Caco-2 (cell line): ENCODE measurements at regions of chr11 and their contacts with region 1.

Region 1: DNA sequence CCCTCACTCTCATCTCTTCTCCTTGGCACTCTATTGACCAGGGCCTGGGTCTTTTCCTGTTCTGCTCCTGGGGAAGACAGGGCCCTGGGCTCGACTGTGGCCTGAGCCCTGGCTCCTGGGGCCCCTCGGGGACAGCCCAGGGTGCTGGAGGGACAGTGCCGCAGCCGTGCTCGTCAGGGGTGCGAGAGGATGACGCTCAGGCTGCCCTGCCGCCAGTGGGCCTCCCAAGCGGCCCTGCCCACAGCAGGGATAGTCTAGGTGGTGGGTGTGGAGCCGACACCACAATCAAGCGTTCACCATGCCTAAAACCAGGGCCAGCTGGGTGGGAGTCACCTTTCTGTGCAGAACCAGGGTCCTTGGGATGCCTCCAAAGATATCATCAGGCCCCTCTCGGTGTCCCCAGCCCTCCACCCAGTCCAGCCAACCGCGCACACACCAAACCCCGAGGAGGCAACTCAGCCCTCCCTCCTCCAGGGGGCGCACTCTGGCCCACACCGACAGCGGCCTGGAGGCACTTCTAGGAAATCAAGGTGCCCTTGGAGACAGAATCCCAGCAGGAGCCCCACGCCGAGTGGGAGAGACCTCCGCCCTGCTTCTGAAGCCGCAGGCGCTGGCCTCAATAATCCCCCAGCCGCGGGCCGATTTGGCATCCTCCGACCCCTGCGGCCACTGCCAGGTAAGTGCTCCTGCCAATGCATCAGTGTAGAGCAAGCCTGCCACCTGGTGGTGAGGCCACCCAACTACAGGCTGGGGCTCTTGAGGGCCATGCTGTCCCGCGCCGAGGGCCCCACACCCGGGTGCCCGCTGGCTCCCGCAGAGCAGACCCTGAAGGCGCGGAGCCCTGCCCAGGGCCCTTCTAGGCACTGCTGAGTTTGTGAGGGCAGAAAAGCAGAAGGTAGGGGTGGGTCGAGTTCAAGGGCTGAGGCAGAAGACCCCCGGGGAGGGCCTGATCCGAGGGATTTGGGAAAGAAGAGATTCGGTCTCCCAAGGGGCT is 496.4 kb downstream of the BUD13 start:
- DNase-seq: peak; percentile 95 to 97
- H3K4me3 ChIP-seq: peak overlapping the region; percentile 29
- H3K4me3 Mint-ChIP-seq: peak overlapping the region; percentile 64
- H3K27ac Mint-ChIP-seq: peak overlapping the region; percentile 27
- H3K4me1 ChIP-seq: peaks cover 23% of the 10 kb centered on the region
- H3K4me1 Mint-ChIP-seq: peaks cover 18% of the 10 kb centered on the region
- H3K27me3 ChIP-seq: no peaks in the 10 kb centered on the region
- H3K27me3 Mint-ChIP-seq: no peaks in the 10 kb centered on the region
- CTCF ChIP-seq: peak; percentile 91 to 100

Region 2: GRCh38 chr11:115324581-115325432 is 951.5 kb before region 1 on chr11:
- CTCF ChIA-PET with region 1: no interaction called
- POLR2A ChIA-PET with region 1: no interaction called
- intact Hi-C with region 1: loop called (anchors 2 kb)
- DNase-seq: peak; percentile 59 to 73
- H3K4me3 ChIP-seq: no peak overlapping the region
- H3K4me3 Mint-ChIP-seq: no peak overlapping the region
- H3K27ac Mint-ChIP-seq: peak overlapping the region; percentile 18
- H3K4me1 ChIP-seq: peaks cover 4% of the 10 kb centered on the region; the same call in 1 of the 2 replicates
- H3K4me1 Mint-ChIP-seq: peaks cover 23% of the 10 kb centered on the region
- H3K27me3 ChIP-seq: no peaks in the 10 kb centered on the region
- H3K27me3 Mint-ChIP-seq: no peaks in the 10 kb centered on the region
- CTCF ChIP-seq: peak; percentile 94 to 97

Region 3: GRCh38 chr11:115990004-115990447 is 286.3 kb before region 1 on chr11:
- CTCF ChIA-PET with region 1: no interaction called
- POLR2A ChIA-PET with region 1: no interaction called
- intact Hi-C with region 1: loop called (anchors 1 kb)
- DNase-seq: peak in 1 of 2 experiments; percentile 63
- H3K4me3 ChIP-seq: no peak overlapping the region
- H3K4me3 Mint-ChIP-seq: no peak overlapping the region
- H3K27ac Mint-ChIP-seq: no peak overlapping the region
- H3K4me1 ChIP-seq: no peaks in the 10 kb centered on the region
- H3K4me1 Mint-ChIP-seq: no peaks in the 10 kb centered on the region
- H3K27me3 ChIP-seq: no peaks in the 10 kb centered on the region
- H3K27me3 Mint-ChIP-seq: peaks cover 19% of the 10 kb centered on the region
- CTCF ChIP-seq: peak; percentile 88 to 91

Region 4: DNA sequence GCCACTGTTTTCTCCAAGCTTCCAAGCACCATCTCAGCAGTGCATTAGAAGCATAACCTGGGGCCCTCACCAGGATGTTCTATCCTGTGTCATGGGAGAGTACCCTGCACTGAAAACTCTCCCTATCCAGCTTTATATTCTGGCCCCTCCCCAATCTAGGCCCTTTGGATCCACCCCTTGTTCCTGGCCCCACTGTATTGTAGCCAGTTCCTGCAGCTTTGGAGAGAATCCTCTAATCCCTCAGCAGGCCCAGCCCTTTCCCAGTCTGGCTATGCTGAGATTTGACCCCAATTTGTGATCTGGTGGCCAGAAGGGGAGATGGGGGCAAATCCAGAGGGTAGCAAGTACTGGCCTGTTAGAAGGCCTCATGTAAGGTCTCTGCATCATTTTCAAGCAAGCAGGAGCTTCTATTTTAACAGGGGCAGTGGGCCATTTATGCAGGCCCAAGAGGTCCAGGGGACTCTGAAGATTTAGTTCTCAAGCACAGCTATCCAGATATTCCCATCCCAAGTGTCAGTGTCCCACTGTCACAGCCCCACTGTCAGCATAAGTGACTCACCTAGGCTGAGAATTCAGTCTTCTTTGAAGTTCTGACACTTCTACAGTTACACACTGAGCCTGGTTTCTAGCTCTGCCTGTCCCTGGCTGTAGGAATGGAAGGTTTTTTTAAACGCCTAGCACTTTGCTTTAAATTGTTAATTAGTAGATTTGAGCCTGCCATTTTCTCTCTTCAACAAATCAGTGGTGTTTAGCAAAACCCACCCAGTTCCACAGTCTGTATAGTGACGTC is 182.7 kb before region 1 on chr11:
- CTCF ChIA-PET with region 1: no interaction called
- POLR2A ChIA-PET with region 1: no interaction called
- intact Hi-C with region 1: loop called (anchors 2 kb)
- DNase-seq: no peak
- H3K4me3 ChIP-seq: no peak overlapping the region
- H3K4me3 Mint-ChIP-seq: no peak overlapping the region
- H3K27ac Mint-ChIP-seq: no peak overlapping the region
- H3K4me1 ChIP-seq: no peaks in the 10 kb centered on the region
- H3K4me1 Mint-ChIP-seq: no peaks in the 10 kb centered on the region
- H3K27me3 ChIP-seq: no peaks in the 10 kb centered on the region
- H3K27me3 Mint-ChIP-seq: peaks cover 20% of the 10 kb centered on the region
- CTCF ChIP-seq: no peak

Region 5: DNA sequence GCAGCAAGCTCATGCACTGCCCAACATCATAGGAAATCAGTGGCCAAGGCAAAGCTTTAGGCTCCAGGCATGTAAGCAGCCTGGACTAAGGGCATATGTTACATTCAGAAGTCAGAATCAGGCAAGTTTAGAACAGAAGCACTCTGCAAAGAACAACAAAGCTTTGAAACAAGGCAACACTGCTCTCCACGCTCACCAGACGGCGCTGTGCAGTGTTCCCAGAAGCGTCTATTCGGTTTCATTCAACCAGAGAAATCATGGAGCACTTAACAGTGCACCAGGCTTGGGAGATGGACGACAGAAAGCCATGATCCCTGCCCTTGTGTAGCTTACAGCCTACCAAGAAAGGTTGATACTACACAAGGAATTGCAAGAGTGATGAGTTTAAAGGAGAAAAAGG is 59.3 kb before region 1 on chr11:
- CTCF ChIA-PET with region 1: interaction called, 11 read pairs
- POLR2A ChIA-PET with region 1: no interaction called
- intact Hi-C with region 1: loop called (anchors 1 kb)
- DNase-seq: peak; percentile 62 to 73
- H3K4me3 ChIP-seq: no peak overlapping the region
- H3K4me3 Mint-ChIP-seq: no peak overlapping the region
- H3K27ac Mint-ChIP-seq: no peak overlapping the region
- H3K4me1 ChIP-seq: no peaks in the 10 kb centered on the region
- H3K4me1 Mint-ChIP-seq: peaks cover under 1% of the 10 kb centered on the region
- H3K27me3 ChIP-seq: no peaks in the 10 kb centered on the region; the same call in 1 of the 2 replicates
- H3K27me3 Mint-ChIP-seq: no peaks in the 10 kb centered on the region
- CTCF ChIP-seq: peak; percentile 93 to 96

Region 6: DNA sequence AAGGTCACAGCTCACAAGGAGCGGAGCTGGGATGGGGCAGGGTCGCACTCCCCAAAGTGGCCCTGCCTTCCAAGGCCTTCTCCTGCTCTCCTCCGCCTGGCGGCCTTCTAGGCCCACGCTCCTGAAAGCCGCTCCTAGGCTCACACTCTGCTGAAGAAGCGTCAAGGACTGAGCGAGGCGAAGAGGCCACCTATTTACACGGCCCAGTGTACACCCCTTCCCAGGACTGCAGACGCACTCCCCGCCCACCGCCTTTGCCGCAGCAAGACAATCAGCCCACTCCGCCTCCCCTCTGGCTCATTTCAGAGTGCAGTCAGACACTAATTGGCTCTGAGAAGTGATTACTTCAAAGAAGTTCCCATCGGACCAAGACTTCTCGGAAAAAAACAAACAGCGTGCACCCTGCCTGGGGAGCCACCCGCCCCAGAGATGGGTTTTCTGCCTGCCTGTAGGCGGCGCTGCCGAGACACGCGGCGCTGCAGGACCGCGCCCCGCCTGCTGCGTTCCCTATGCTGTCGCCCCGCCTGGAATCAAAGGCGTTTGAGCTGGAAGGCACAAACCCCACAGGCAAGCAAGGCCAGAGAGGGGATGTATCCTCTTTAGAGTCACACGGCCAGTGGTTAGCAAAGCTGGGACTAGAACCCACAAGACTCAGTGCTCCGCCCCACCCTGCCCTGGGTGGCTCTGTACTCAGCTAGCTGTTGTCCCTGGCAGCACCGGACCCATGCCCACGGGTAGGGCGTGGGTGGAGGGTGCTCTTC is 81.6 kb after region 1 on chr11:
- CTCF ChIA-PET with region 1: no interaction called
- POLR2A ChIA-PET with region 1: no interaction called
- intact Hi-C with region 1: no loop called
- DNase-seq: no peak
- H3K4me3 ChIP-seq: no peak overlapping the region
- H3K4me3 Mint-ChIP-seq: no peak overlapping the region
- H3K27ac Mint-ChIP-seq: no peak overlapping the region
- H3K4me1 ChIP-seq: no peaks in the 10 kb centered on the region
- H3K4me1 Mint-ChIP-seq: no peaks in the 10 kb centered on the region
- H3K27me3 ChIP-seq: no peaks in the 10 kb centered on the region
- H3K27me3 Mint-ChIP-seq: no peaks in the 10 kb centered on the region
- CTCF ChIP-seq: no peak

Region 7: GRCh38 chr11:116499396-116500003 is 223.2 kb after region 1 on chr11:
- CTCF ChIA-PET with region 1: interaction called, 10 read pairs
- POLR2A ChIA-PET with region 1: no interaction called
- intact Hi-C with region 1: loop called (anchors 1 kb)
- DNase-seq: peak; percentile 89 to 92
- H3K4me3 ChIP-seq: no peak overlapping the region
- H3K4me3 Mint-ChIP-seq: no peak overlapping the region
- H3K27ac Mint-ChIP-seq: no peak overlapping the region
- H3K4me1 ChIP-seq: peaks cover 7% of the 10 kb centered on the region; the same call in 1 of the 2 replicates
- H3K4me1 Mint-ChIP-seq: no peaks in the 10 kb centered on the region
- H3K27me3 ChIP-seq: no peaks in the 10 kb centered on the region
- H3K27me3 Mint-ChIP-seq: peaks cover 3% of the 10 kb centered on the region
- CTCF ChIP-seq: peak; percentile 86 to 93

Region 8: DNA sequence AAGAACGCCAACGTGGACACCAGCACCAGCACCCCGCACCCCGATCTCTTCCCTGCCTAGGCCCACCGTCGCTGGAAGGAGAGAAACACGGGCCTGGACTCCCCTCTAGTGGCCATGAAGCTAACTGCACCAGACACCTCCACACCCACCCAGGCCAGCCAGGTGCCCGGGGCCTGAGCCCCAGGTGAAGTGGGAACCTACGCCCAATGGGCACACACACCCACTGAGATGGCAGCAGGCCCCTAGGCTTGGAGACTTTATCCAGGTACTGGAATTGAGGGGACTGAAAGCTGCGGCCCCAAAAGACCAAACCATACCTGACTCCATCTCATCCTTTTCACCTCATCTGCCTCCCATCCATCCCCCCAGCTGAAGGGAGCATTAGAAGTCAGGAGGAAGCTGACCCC is 415.4 kb after region 1 on chr11:
- CTCF ChIA-PET with region 1: no interaction called
- POLR2A ChIA-PET with region 1: no interaction called
- intact Hi-C with region 1: loop called (anchors 5 kb)
- DNase-seq: peak; percentile 78 to 86
- H3K4me3 ChIP-seq: no peak overlapping the region
- H3K4me3 Mint-ChIP-seq: no peak overlapping the region
- H3K27ac Mint-ChIP-seq: no peak overlapping the region
- H3K4me1 ChIP-seq: peaks cover 47% of the 10 kb centered on the region
- H3K4me1 Mint-ChIP-seq: peaks cover 17% of the 10 kb centered on the region
- H3K27me3 ChIP-seq: no peaks in the 10 kb centered on the region
- H3K27me3 Mint-ChIP-seq: no peaks in the 10 kb centered on the region
- CTCF ChIP-seq: peak; percentile 98 to 100